CD14-positive monocyte (primary cell): ENCODE measurements at regions of chr19 and their contacts with region 1.

Region 1: GRCh38 chr19:35306473-35307246 is 14.7 kb downstream of the MAG start:
- DNase-seq: no peak
- H3K4me3 ChIP-seq: no peak overlapping the region
- H3K4me3 Mint-ChIP-seq: peak overlapping the region in 1 of 2 donors; percentile 26
- H3K27ac ChIP-seq: peak overlapping the region in 1 of 2 donors; percentile 48
- H3K27ac Mint-ChIP-seq: peak overlapping the region in 6 of 7 donors; percentile 73 to 88 (median 79)
- H3K4me1 ChIP-seq: peaks cover 18 to 21% of the 10 kb centered on the region in 2 donors
- H3K4me1 Mint-ChIP-seq: peaks cover 33% of the 10 kb centered on the region
- H3K27me3 ChIP-seq: no peaks in the 10 kb centered on the region
- H3K27me3 Mint-ChIP-seq: peaks cover 1 to 4% (median 3%) of the 10 kb centered on the region in 3 donors
- CTCF ChIP-seq: peak; percentile 41

Region 2: GRCh38 chr19:35318650-35319448 is 12.2 kb after region 1 on chr19:
- intact Hi-C with region 1: loop called in 1 of 2 experiments (anchors 1 kb)
- DNase-seq: peak; percentile 97 to 99 (median 97)
- H3K4me3 ChIP-seq: no peak overlapping the region
- H3K4me3 Mint-ChIP-seq: peak overlapping the region; percentile 20 to 67
- H3K27ac ChIP-seq: peak overlapping the region; percentile 83 to 90
- H3K27ac Mint-ChIP-seq: peak overlapping the region; percentile 87 to 99 (median 98)
- H3K4me1 ChIP-seq: peaks cover 65 to 74% of the 10 kb centered on the region in 2 donors
- H3K4me1 Mint-ChIP-seq: peaks cover 65% of the 10 kb centered on the region
- H3K27me3 ChIP-seq: no peaks in the 10 kb centered on the region
- H3K27me3 Mint-ChIP-seq: peaks cover 0 to 5% (median 2%) of the 10 kb centered on the region in 3 donors
- CTCF ChIP-seq: no peak

Region 3: DNA sequence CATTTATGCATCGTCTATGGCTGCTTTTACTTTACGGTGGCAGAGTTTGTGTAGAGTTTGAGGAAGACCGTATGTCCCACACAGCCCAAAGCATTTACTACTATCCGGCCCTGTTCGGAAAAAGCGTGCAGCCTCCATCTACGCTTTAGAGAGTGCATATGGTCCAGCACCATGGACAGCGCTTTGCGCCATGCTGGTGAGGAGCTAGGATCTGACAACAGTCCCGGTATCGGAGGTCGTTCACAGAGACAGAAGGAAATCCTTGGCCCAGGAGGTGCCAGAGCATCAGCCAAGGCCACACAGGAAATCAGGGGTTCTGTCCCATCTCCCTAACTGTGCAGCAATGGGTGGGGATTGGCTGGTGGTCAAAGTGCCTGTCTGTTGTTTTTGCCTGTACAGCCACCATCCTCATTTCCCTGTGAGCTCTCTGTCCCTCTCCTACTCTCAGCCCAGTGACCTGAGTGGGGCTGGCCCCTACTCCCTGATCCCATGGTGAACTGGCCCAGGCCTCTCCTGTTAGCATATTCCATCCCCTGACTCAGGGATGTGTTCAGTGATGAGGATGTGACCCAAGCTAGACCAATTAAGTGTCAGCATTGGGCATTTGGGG is 522.1 kb after region 1 on chr19:
- intact Hi-C with region 1: no loop called
- DNase-seq: no peak
- H3K4me3 ChIP-seq: no peak overlapping the region
- H3K4me3 Mint-ChIP-seq: peak overlapping the region in 1 of 2 donors; percentile 28
- H3K27ac ChIP-seq: no peak overlapping the region
- H3K27ac Mint-ChIP-seq: no peak overlapping the region
- H3K4me1 ChIP-seq: no peaks in the 10 kb centered on the region
- H3K4me1 Mint-ChIP-seq: no peaks in the 10 kb centered on the region
- H3K27me3 ChIP-seq: no peaks in the 10 kb centered on the region
- H3K27me3 Mint-ChIP-seq: peaks cover 6 to 23% (median 11%) of the 10 kb centered on the region in 3 donors
- CTCF ChIP-seq: no peak